ENCODE measurements at regions of chr4 and their contacts with region 1.

Region 1: DNA sequence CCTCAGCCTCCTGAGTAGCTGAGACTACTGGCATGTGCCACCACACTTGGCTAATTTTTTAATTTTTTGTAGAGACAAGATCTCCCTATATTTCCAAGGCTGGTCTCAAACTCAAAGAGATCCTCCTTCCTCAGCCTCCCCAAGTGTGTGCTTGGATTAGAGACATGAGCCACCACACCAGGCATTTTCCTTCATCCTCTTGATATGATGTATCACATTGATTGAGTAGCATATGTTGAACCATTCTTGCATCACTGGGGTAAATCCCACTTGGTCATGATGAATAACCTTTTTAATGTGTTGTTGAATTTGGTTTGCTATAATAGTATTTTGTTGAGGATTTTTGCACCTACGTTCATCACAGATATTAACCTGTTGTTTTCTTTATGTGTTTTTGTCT is 24.2 kb upstream of the PPM1K start:
- DNase-seq: no peak
- ATAC-seq: no peak
- H3K4me3 ChIP-seq: no peak overlapping the region
- H3K27ac ChIP-seq: no peak overlapping the region
- H3K4me1 ChIP-seq: no peaks in the 10 kb centered on the region
- H3K27me3 ChIP-seq: no peaks in the 10 kb centered on the region; the same call in 1 of the 2 replicates
- CTCF ChIP-seq: no peak
- POLR2A ChIP-seq: no peak
- RAD21 ChIP-seq: no peak

Region 2: DNA sequence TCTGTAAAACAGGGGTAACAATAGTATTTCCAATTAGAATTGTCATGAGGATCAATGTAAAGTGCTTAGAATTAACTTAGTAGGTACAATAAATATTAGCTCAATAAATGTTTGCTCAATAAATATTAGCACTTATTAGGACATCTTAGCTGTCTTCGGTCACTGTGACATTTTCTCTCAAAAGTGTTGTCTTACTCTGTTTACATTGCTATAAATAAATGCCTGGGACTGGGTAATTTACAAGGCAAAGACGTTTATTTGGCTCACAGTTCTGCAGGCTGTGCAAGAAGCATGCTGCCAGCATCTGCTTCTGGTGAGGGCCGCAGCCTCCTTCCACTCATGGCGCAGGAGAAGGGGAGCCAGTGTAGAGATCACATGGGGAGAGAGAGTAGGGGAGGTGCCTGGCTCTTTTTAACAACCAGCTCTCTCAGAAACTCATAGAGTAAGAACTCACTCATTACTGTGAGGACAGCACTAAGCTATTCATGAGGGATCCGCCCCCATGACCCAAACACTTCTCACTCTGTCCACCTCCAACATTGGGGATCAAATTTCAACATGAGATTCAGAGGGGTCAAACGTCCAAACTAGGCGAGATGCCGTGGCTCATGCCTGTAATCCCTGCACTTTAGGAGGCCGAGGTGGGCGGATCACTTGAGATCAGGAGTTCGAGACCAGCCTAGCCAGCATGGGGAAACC is 26.5 kb after region 1 on chr4:
- CTCF ChIA-PET with region 1: no interaction called
- POLR2A ChIA-PET with region 1: interaction called, 10 read pairs
- dilution Hi-C with region 1: no loop called
- in situ Hi-C with region 1: no loop called
- intact Hi-C with region 1: no loop called
- DNase-seq: peak; percentile 24
- ATAC-seq: peak; percentile 64
- H3K4me3 ChIP-seq: no peak overlapping the region
- H3K27ac ChIP-seq: no peak overlapping the region
- H3K4me1 ChIP-seq: no peaks in the 10 kb centered on the region
- H3K27me3 ChIP-seq: peaks cover 5% of the 10 kb centered on the region
- CTCF ChIP-seq: no peak
- POLR2A ChIP-seq: no peak
- RAD21 ChIP-seq: no peak

Region 3: GRCh38 chr4:88446124-88446523 is 137.5 kb after region 1 on chr4:
- CTCF ChIA-PET with region 1: no interaction called
- POLR2A ChIA-PET with region 1: no interaction called
- dilution Hi-C with region 1: no loop called
- in situ Hi-C with region 1: no loop called
- intact Hi-C with region 1: no loop called
- DNase-seq: no peak
- ATAC-seq: no peak
- H3K4me3 ChIP-seq: no peak overlapping the region
- H3K27ac ChIP-seq: no peak overlapping the region
- H3K4me1 ChIP-seq: no peaks in the 10 kb centered on the region
- H3K27me3 ChIP-seq: peaks cover 2% of the 10 kb centered on the region
- CTCF ChIP-seq: no peak
- POLR2A ChIP-seq: no peak
- RAD21 ChIP-seq: no peak